ENCODE measurements at regions of chr13 and their contacts with region 1.

Region 1: DNA sequence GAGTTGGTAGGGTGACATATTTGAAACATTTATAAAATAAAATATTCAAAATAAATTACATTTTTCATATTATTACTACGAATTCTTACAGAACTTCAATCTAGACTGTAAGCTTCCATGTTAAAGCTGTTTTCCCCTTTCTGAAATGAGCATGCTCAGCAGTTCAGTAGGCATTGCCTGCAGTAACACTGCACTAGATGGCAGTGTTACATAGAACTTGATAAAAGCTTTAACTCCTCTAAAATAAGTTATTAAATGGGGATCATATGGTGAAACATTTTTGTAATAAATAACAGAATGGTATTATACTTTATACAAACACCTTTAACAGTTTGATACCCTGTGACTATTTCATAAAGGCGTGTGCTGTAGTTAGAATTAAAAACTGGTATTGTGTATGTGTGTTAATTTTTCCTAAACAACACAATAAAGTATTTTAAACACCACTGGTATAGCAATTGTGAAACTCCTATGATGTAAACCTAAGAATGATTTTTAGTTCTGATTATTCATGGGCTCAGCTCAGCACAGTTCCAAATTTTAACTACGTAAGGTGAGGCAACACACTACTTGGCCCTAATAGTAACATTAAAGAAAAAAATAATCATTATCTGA is 11.6 kb upstream of the GPR18 start:
- DNase-seq: peak; percentile 71
- H3K4me3 ChIP-seq: no peak overlapping the region
- H3K27ac ChIP-seq: no peak overlapping the region
- H3K4me1 ChIP-seq: no peaks in the 10 kb centered on the region
- H3K27me3 ChIP-seq: no peaks in the 10 kb centered on the region
- CTCF ChIP-seq: peak; percentile 43 to 52
- POLR2A ChIP-seq: no peak

Region 2: GRCh38 chr13:99087096-99087953 is 182.4 kb before region 1 on chr13:
- CTCF ChIA-PET with region 1: interaction called, 3 read pairs
- POLR2A ChIA-PET with region 1: no interaction called
- dilution Hi-C with region 1: no loop called
- intact Hi-C with region 1: loop called (anchors 10 kb)
- DNase-seq: peak; percentile 88
- H3K4me3 ChIP-seq: peak overlapping the region; percentile 61 to 65 (median 63)
- H3K27ac ChIP-seq: peak overlapping the region; percentile 20
- H3K4me1 ChIP-seq: peaks cover 19% of the 10 kb centered on the region
- H3K27me3 ChIP-seq: no peaks in the 10 kb centered on the region
- CTCF ChIP-seq: peak in 1 of 2 donors; percentile 45
- POLR2A ChIP-seq: no peak

Region 3: DNA sequence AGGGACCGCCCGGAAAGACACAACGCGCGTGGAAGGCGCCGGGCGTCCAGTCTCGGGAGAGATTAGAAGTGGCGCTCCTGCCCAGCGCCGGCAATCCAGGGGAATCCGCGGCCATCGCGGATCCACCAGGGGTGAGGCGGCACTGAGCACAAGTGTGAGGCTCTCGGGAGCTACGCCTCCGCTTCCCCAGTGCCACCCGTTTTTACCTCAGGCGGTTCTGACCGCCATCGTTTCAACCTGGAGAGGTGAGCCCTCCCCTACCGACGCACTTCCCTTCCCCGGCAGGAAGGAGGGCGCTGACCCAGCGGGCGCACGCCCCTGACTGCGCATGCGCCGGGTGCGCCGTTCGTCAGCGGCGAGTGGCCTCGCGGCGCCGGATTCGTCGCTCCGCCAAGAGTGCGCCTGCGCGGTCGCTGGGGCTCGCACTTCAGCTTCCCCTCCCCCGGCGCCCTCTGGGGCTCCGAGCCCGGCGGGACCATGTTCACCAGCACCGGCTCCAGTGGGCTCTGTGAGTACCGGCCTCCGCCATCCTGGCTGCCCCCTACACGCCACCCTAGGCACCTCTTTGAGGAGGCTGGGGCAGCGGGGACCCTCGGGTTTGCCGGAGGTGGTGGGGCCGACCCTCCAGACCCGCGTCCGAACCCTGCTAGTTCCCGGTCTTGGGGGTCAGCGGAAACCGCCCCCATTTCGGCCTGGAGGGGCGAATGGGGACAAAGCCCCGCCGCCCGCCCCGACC is 69.1 kb before region 1 on chr13 and contains the start of gene UBAC2:
- CTCF ChIA-PET with region 1: interaction called, 65 read pairs
- POLR2A ChIA-PET with region 1: no interaction called
- dilution Hi-C with region 1: no loop called
- intact Hi-C with region 1: loop called (anchors 2 kb)
- DNase-seq: peak; percentile 96
- H3K4me3 ChIP-seq: peak within 1 kb of the TSS; percentile 75 to 95 (median 79)
- H3K27ac ChIP-seq: peak within 1 kb of the TSS; percentile 85
- H3K4me1 ChIP-seq: peaks cover 7% of the 10 kb centered on the region
- H3K27me3 ChIP-seq: no peaks in the 10 kb centered on the region
- CTCF ChIP-seq: no peak
- POLR2A ChIP-seq: peak; percentile 97
- total RNA-seq, gene UBAC2: 45.2 and 45.7 TPM in 2 replicates

Region 4: DNA sequence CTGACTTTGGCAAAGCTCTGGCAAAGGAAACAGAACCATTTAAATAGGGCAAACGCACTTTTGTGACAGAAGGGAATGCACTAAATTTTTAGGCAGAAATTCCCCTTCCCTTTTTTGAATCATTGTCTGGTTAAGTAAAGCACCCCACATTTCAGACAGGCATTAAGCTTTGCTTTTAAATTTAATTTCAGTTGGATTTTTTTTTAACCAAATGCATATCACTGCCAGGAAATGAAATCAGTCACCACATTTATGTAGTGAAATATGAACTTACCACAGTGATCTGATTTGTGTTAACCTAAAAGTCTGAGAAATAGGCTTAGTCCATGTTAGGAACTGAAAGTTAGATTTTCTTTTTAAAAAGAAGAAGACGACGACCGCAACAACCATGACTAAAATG is 26.7 kb after region 1 on chr13:
- CTCF ChIA-PET with region 1: interaction called, 15 read pairs
- POLR2A ChIA-PET with region 1: interaction called, 3 read pairs
- dilution Hi-C with region 1: no loop called
- intact Hi-C with region 1: no loop called
- DNase-seq: no peak
- H3K4me3 ChIP-seq: no peak overlapping the region
- H3K27ac ChIP-seq: no peak overlapping the region
- H3K4me1 ChIP-seq: no peaks in the 10 kb centered on the region
- H3K27me3 ChIP-seq: no peaks in the 10 kb centered on the region
- CTCF ChIP-seq: no peak
- POLR2A ChIP-seq: no peak

Region 5: DNA sequence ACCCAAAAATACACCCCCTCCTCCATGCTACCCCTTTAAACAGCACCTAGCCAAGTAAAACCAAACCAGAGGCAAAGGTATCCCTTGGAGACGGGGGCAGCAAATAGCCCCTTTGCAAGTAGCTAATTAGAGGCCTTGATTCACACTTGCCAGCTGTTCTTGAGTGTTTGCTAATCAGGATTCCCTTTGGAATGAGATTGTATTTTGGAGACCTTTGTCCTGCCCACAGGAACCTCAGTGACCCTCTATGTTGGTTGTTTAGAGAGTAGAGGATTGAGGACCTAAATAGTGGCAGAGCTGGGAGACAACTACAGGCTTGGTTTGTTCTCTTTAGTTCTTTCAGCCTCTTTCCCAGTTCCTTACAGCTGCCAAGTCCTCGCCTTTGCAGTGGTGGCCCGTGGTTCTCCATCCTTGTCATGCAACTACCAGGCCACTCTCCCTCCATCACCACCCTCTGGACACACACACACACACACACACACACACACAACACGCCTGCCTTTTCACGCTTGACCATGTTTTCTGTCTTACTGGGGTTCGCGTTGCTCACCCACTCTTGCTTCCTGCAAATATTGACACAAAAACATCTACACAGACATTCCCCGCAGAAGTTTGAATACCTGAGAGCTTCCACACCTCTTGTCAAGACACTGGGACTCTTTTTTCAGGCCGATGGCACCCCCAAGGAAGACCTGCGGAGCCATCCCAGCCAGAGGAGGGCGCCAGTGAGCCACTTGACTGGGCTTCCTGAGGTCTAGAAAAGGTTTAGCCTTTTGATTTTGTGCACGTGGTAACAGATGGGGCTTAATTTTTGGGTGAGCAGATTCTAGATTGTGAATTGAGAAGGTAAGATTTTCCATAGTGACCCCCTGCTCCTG is 117.4 kb after region 1 on chr13:
- CTCF ChIA-PET with region 1: interaction called, 23 read pairs
- POLR2A ChIA-PET with region 1: no interaction called
- dilution Hi-C with region 1: no loop called
- intact Hi-C with region 1: loop called (anchors 1 kb)
- DNase-seq: peak; percentile 33
- H3K4me3 ChIP-seq: no peak overlapping the region
- H3K27ac ChIP-seq: no peak overlapping the region
- H3K4me1 ChIP-seq: no peaks in the 10 kb centered on the region
- H3K27me3 ChIP-seq: no peaks in the 10 kb centered on the region
- CTCF ChIP-seq: peak; percentile 74 to 86
- POLR2A ChIP-seq: no peak

Region 6: GRCh38 chr13:99448546-99448945 is 178.8 kb after region 1 on chr13:
- CTCF ChIA-PET with region 1: interaction called, 12 read pairs
- POLR2A ChIA-PET with region 1: no interaction called
- dilution Hi-C with region 1: no loop called
- intact Hi-C with region 1: no loop called
- DNase-seq: no peak
- H3K4me3 ChIP-seq: no peak overlapping the region
- H3K27ac ChIP-seq: no peak overlapping the region
- H3K4me1 ChIP-seq: no peaks in the 10 kb centered on the region
- H3K27me3 ChIP-seq: peaks cover 12 to 18% of the 10 kb centered on the region in 2 experiments
- CTCF ChIP-seq: no peak
- POLR2A ChIP-seq: no peak

Region 7: DNA sequence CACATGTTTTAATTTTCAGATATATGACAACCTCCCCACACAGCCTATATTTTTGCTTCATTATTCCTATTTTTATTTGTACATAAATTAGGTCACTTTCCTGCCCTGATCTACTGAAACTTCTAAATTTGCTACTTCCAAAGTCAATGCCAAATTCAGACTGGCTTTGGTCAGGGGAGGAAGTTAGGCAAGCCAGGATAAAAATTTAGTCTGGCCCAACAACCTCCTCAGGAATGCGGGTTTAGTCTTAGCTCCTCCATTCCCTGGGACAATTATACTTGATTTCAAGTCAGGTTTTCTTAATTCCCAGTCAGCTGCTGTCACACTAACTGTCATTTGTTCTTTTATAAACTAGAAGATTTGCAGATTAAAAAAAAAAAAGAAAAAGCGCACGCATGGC is 315.9 kb after region 1 on chr13:
- CTCF ChIA-PET with region 1: no interaction called
- POLR2A ChIA-PET with region 1: no interaction called
- dilution Hi-C with region 1: no loop called
- intact Hi-C with region 1: no loop called
- DNase-seq: no peak
- H3K4me3 ChIP-seq: no peak overlapping the region
- H3K27ac ChIP-seq: no peak overlapping the region
- H3K4me1 ChIP-seq: peaks cover 6% of the 10 kb centered on the region
- H3K27me3 ChIP-seq: peaks cover 0 to 6% of the 10 kb centered on the region in 2 experiments
- CTCF ChIP-seq: no peak
- POLR2A ChIP-seq: no peak

Region 8: DNA sequence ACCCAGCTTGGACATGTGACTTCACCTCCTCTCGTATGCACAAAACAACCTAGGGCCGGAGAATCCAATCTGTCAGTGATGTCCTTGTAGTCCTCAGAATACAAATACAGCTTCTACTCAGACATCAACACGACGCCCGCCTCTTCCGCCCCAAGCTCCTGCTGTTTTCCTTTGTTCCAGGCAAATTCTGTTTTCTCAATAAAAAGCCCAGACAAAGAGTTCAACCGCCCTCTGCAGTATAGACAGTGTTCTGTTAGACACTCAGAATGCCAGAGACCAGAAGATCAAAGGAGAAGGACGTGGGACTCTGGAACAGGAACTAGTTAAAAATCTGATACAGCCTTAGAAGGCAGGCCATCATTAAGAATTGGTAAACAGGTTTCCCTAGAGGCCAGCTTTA is 1360.8 kb after region 1 on chr13:
- CTCF ChIA-PET with region 1: no interaction called
- POLR2A ChIA-PET with region 1: no interaction called
- dilution Hi-C with region 1: no loop called
- intact Hi-C with region 1: no loop called
- DNase-seq: peak; percentile 40
- H3K4me3 ChIP-seq: no peak overlapping the region
- H3K27ac ChIP-seq: no peak overlapping the region
- H3K4me1 ChIP-seq: peaks cover under 1% of the 10 kb centered on the region
- H3K27me3 ChIP-seq: no peaks in the 10 kb centered on the region
- CTCF ChIP-seq: peak in 1 of 2 donors; percentile 3
- POLR2A ChIP-seq: no peak

Measured in endothelial cell of umbilical vein (primary cell).